ENCODE measurements at regions of chr1 and their contacts with region 1.

Region 1: GRCh38 chr1:18902523-18903290 is at the start of gene ALDH4A1:
- DNase-seq: peak; percentile 98
- ATAC-seq: peak; percentile 96
- H3K4me3 ChIP-seq: peak within 1 kb of the TSS; percentile 87
- H3K27ac ChIP-seq: peak within 1 kb of the TSS; percentile 98
- H3K4me1 ChIP-seq: peaks cover 29% of the 10 kb centered on the region
- H3K27me3 ChIP-seq: no peaks in the 10 kb centered on the region
- CTCF ChIP-seq: no peak
- total RNA-seq, gene ALDH4A1: 11.8 TPM

Region 2: DNA sequence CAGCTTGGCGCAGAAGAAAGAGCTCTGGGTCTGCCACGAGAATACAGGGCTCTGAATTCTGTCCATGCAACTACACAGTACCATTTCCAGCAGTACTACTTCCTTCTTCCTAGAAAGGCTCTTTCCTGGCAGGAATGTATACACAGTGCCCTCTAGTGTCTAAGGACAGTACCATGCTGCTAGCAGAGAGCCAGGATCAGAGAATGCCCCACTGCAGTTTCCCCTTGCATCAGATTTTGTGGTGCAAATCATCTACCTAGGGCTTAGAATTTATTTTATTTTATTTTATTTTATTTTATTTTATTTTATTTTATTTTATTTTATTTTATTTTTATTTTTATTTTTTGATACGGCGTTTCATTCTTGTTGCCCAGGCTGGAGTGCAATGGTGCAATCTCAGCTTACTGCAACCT is 221.3 kb before region 1 on chr1:
- intact Hi-C with region 1: no loop called
- DNase-seq: no peak
- ATAC-seq: peak; percentile 86
- H3K4me3 ChIP-seq: no peak overlapping the region
- H3K27ac ChIP-seq: no peak overlapping the region
- H3K4me1 ChIP-seq: no peaks in the 10 kb centered on the region
- H3K27me3 ChIP-seq: peaks cover 43% of the 10 kb centered on the region
- CTCF ChIP-seq: peak; percentile 66

Region 3: GRCh38 chr1:19067182-19067911 is 164.6 kb after region 1 on chr1:
- intact Hi-C with region 1: no loop called
- DNase-seq: no peak
- ATAC-seq: peak; percentile 42
- H3K4me3 ChIP-seq: no peak overlapping the region
- H3K27ac ChIP-seq: peak overlapping the region; percentile 2
- H3K4me1 ChIP-seq: peaks cover 24% of the 10 kb centered on the region
- H3K27me3 ChIP-seq: no peaks in the 10 kb centered on the region
- CTCF ChIP-seq: no peak

Region 4: DNA sequence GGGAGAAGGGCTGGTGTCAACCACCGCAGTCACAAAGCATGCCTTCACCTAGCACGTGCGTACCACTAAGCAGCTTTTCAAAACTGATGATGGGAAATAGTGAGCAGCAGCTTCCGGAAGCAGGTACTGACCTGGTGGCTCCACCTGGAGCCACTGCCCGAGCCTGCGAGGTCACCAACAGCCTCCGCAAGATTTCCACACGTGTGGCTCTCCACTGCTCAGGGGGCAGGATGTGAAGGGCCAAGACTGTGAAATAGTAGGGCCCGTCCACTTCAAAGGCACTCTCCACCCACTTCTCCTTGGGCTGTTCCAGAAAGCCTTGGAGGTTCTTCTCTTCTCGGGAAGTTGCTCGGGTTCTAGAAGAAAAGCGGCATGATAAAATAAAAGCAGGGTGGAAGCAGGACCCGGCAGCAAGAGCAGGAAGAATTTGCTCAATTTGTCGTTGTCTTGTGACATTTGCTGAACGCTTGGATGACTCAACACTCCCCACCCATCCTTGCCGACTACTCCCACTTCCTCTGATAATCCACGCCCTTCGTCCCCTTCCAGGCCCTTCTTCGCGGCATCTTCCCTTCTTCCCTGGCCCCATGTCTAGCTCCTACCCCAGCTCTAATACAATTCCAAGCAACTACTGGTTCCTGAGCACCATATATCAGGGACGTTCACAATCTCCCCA is 178.6 kb after region 1 on chr1:
- intact Hi-C with region 1: loop called (anchors 10 kb)
- DNase-seq: no peak
- ATAC-seq: peak; percentile 67
- H3K4me3 ChIP-seq: no peak overlapping the region
- H3K27ac ChIP-seq: peak overlapping the region; percentile 52
- H3K4me1 ChIP-seq: peaks cover 12% of the 10 kb centered on the region
- H3K27me3 ChIP-seq: no peaks in the 10 kb centered on the region
- CTCF ChIP-seq: no peak

Region 5: DNA sequence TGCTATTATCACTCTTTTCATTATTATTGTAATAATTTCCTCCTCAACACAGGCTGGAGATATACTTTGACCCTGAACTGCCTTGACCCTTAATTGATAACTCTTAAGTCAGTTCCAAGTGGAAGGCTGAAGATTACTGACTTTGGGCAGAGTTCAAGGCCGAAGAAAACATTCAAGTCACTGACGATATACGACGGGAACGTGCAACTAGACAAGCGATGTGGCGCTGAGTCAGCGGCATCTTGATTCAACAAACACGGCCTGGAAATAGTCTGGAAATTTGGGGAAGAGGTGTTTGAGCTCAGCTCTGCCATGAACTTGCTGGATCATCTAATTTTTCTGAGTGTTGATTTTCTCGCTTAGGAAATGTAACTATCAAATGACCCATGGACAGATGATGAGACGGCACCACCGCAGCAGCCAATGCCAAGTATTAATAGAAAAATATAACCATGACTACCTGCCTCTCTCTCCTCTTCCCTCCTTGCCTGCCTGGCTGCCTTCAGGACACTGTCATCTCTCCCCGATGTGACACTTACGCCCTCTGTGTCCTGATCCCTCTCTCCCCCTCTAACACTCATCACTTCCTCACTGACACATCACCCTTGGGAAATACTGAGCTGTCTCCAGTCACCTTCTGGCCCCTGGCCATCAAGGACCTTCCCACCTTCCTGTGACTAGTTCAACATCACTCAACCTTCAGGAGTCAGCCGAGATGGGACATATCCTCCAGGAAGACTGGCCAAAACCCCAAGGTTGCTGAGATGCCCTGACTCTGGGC is 847.6 kb after region 1 on chr1:
- intact Hi-C with region 1: no loop called
- DNase-seq: no peak
- ATAC-seq: no peak
- H3K4me3 ChIP-seq: no peak overlapping the region
- H3K27ac ChIP-seq: no peak overlapping the region
- H3K4me1 ChIP-seq: no peaks in the 10 kb centered on the region
- H3K27me3 ChIP-seq: no peaks in the 10 kb centered on the region
- CTCF ChIP-seq: no peak

Measured in upper lobe of right lung (tissue), 1 donor.